Cardiac septum (tissue), 1 donor: ENCODE measurements at regions of chr19 and their contacts with region 1.

Region 1: DNA sequence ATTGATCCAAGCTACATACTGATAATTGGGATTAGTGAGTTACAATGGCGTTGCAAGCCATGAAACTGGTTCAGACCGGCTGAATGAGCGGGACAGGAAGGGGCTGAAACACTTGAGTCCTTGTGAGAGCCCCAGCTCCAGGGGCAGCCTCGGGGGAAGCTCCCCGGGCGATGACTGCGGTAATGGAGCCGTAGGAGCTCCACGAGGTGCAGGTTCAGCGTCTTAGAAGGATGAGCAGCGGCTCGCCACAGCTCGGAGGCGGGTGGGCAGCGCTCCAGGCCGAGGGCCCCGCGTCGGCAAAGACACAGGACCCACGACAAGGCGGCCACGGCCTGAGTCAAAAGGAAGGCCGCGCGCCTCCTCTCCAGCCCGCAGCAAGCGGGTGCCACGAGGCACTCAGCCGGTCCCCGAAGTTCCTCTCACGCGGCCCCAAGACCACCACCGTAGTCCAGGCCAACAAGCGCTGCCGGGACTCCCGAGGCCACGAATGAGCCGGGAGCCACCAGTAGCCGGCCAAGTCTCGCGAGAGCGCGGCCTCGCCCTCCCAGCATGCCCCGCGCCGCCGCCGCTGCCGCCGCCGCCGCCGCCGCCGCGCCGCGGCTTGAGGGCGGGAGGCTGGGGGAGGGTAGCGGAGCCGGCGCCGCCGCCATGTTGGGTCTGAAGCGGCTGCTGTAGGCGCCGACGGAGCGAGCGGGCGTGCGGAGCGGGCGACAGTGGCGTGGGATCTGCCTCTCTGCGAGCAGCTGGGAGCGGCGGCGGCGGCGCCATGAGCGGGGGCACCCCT is at the start of gene LSM14A:
- DNase-seq: peak; percentile 95
- total RNA-seq, gene LSM14A: 69.5 TPM

Region 2: GRCh38 chr19:34134190-34135053 is 37.6 kb before region 1 on chr19:
- intact Hi-C with region 1: loop called (anchors 2 kb)
- DNase-seq: peak; percentile 91

Region 3: GRCh38 chr19:34274827-34275625 is 103.0 kb after region 1 on chr19:
- intact Hi-C with region 1: no loop called
- DNase-seq: no peak

Region 4: GRCh38 chr19:34288381-34288780 is 116.3 kb after region 1 on chr19:
- intact Hi-C with region 1: no loop called
- DNase-seq: no peak